Naive thymus-derived CD4-positive, alpha-beta T cell (primary cell): ENCODE measurements at regions of chr10 and their contacts with region 1.

Region 1: GRCh38 chr10:69408318-69409175 is 8.2 kb downstream of the TACR2 start:
- DNase-seq: peak; percentile 82 to 92 (median 90)
- ATAC-seq: peak; percentile 94
- H3K4me3 ChIP-seq: peak overlapping the region; percentile 54
- H3K4me3 Mint-ChIP-seq: peak overlapping the region; percentile 65 to 83 (median 74)
- H3K27ac ChIP-seq: peak overlapping the region; percentile 76
- H3K27ac Mint-ChIP-seq: peak overlapping the region; percentile 82 to 96 (median 92)
- H3K4me1 ChIP-seq: peaks cover 13 to 14% of the 10 kb centered on the region in 2 donors
- H3K4me1 Mint-ChIP-seq: peaks cover 14 to 28% (median 20%) of the 10 kb centered on the region in 7 donors
- H3K27me3 ChIP-seq: no peaks in the 10 kb centered on the region
- H3K27me3 Mint-ChIP-seq: no peaks in the 10 kb centered on the region

Region 2: GRCh38 chr10:67764012-67764822 is 1644.3 kb before region 1 on chr10:
- CTCF ChIA-PET with region 1: no interaction called
- POLR2A ChIA-PET with region 1: no interaction called
- intact Hi-C with region 1: loop called in 1 of 2 experiments (anchors 5 kb)
- DNase-seq: peak; percentile 96 to 99 (median 98)
- ATAC-seq: peak; percentile 88
- H3K4me3 ChIP-seq: peak overlapping the region; percentile 99
- H3K4me3 Mint-ChIP-seq: peak overlapping the region; percentile 81 to 99 (median 94)
- H3K27ac ChIP-seq: peak overlapping the region; percentile 81
- H3K27ac Mint-ChIP-seq: peak overlapping the region; percentile 95 to 100 (median 100)
- H3K4me1 ChIP-seq: peaks cover 4 to 6% of the 10 kb centered on the region in 2 donors
- H3K4me1 Mint-ChIP-seq: peaks cover 0 to 37% (median 14%) of the 10 kb centered on the region in 7 donors
- H3K27me3 ChIP-seq: no peaks in the 10 kb centered on the region
- H3K27me3 Mint-ChIP-seq: peaks cover 0 to 16% (median 0%) of the 10 kb centered on the region in 5 donors

Region 3: DNA sequence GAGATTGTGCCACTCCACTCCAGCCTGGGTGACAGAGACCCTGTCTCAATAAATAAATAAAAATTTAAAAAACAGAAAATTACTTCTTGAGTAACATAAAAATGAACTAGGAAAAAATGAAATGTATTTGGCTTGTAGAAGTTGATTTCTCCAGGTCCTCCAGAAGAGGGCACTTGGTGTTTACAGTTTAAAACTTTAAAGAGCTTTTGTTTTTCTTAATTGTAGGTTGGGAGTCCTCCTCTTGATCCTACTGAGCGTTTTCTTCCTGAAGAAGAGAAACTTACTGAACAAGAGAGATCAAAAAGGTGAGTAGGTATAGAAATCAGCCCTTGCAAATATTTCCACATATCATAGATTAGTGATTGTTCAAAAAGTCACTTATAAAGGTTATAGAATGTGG is 403.7 kb before region 1 on chr10:
- CTCF ChIA-PET with region 1: no interaction called
- POLR2A ChIA-PET with region 1: no interaction called
- intact Hi-C with region 1: loop called in 1 of 2 experiments (anchors 5 kb)
- DNase-seq: peak in 7 of 9 donors; percentile 42 to 72 (median 60)
- ATAC-seq: peak; percentile 74
- H3K4me3 ChIP-seq: no peak overlapping the region
- H3K4me3 Mint-ChIP-seq: no peak overlapping the region
- H3K27ac ChIP-seq: no peak overlapping the region
- H3K27ac Mint-ChIP-seq: peak overlapping the region in 4 of 9 donors; percentile 23 to 43 (median 28)
- H3K4me1 ChIP-seq: peaks cover 0 to 3% of the 10 kb centered on the region in 2 donors
- H3K4me1 Mint-ChIP-seq: peaks cover 0 to 11% (median 5%) of the 10 kb centered on the region in 7 donors
- H3K27me3 ChIP-seq: no peaks in the 10 kb centered on the region
- H3K27me3 Mint-ChIP-seq: no peaks in the 10 kb centered on the region

Region 4: GRCh38 chr10:69318106-69318866 is 90.3 kb before region 1 on chr10:
- CTCF ChIA-PET with region 1: interaction called, 3 read pairs
- POLR2A ChIA-PET with region 1: interaction called, 5 read pairs
- intact Hi-C with region 1: loop called (anchors 1 kb)
- DNase-seq: peak; percentile 88 to 96 (median 91)
- ATAC-seq: peak; percentile 97
- H3K4me3 ChIP-seq: peak overlapping the region; percentile 85
- H3K4me3 Mint-ChIP-seq: peak overlapping the region; percentile 86 to 99 (median 96)
- H3K27ac ChIP-seq: peak overlapping the region; percentile 90
- H3K27ac Mint-ChIP-seq: peak overlapping the region; percentile 51 to 97 (median 86)
- H3K4me1 ChIP-seq: peaks cover 22 to 26% of the 10 kb centered on the region in 2 donors
- H3K4me1 Mint-ChIP-seq: peaks cover 7 to 49% (median 36%) of the 10 kb centered on the region in 7 donors
- H3K27me3 ChIP-seq: no peaks in the 10 kb centered on the region
- H3K27me3 Mint-ChIP-seq: no peaks in the 10 kb centered on the region

Region 5: GRCh38 chr10:69451209-69451783 is 42.7 kb after region 1 on chr10 and contains the start of gene TSPAN15:
- CTCF ChIA-PET with region 1: interaction called, 3 read pairs
- POLR2A ChIA-PET with region 1: interaction called, 4 read pairs
- intact Hi-C with region 1: loop called in 1 of 2 experiments (anchors 1 kb)
- DNase-seq: peak; percentile 61 to 81 (median 75)
- ATAC-seq: peak; percentile 94
- H3K4me3 ChIP-seq: peak within 1 kb of the TSS; percentile 67
- H3K4me3 Mint-ChIP-seq: peak within 1 kb of the TSS; percentile 80 to 92 (median 87)
- H3K27ac ChIP-seq: peak within 1 kb of the TSS; percentile 49
- H3K27ac Mint-ChIP-seq: peak within 1 kb of the TSS in 5 of 9 donors; percentile 5 to 82 (median 62)
- H3K4me1 ChIP-seq: peaks cover 0 to 6% of the 10 kb centered on the region in 2 donors
- H3K4me1 Mint-ChIP-seq: peaks cover 13 to 28% (median 22%) of the 10 kb centered on the region in 7 donors
- H3K27me3 ChIP-seq: no peaks in the 10 kb centered on the region
- H3K27me3 Mint-ChIP-seq: peaks cover 0 to 15% (median 5%) of the 10 kb centered on the region in 5 donors
- total RNA-seq, gene TSPAN15: 1.2 to 7.2 (median 1.9) TPM

Region 6: DNA sequence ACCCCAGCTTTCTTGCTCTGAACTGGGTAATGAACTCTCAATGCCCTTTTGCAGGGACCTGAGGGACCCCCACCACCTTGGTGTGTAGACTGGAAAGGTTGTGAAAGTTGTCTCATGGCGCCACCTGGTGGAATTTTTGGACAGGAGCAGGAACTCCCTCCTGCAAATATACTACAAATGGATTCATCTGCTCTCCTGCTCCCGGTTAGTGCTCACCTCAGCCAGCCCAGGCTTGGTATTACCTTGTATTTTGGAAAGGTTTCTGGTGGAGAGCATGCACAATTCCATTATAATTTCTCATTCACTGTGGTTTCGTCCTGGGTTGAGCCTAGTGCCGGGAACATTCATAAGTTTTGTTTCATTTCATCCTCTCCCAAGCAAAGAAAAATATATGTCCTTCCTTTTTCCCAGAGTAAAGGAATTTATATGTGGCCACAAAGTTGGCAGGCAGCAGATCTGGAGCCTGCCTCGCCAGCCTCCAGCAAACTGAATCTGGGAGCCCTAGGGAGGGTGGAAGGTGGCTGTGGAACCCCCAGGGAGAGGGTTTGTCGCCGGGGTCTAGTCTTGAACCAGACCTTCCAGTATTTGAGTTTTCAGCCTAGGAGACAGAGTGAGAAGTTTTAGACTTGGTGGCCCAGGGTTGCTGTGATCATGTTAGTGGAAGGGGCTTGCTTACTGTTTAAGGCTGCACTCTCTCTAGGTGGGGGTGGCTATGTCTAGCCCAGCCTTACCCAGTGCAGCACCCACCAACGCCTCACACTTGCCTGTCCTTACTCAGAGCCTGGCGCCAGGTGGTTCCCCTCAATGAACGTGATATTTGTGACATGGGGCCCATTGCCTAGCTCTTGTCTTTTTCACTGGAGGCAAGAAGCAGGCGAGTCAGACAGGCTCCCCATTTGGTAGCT is 231.0 kb after region 1 on chr10:
- CTCF ChIA-PET with region 1: interaction called, 5 read pairs
- POLR2A ChIA-PET with region 1: interaction called, 5 read pairs
- intact Hi-C with region 1: loop called (anchors 1 to 2 kb)
- DNase-seq: peak; percentile 37 to 75 (median 68)
- ATAC-seq: peak; percentile 61
- H3K4me3 ChIP-seq: no peak overlapping the region
- H3K4me3 Mint-ChIP-seq: no peak overlapping the region
- H3K27ac ChIP-seq: no peak overlapping the region
- H3K27ac Mint-ChIP-seq: peak overlapping the region in 2 of 9 donors; percentile 9 to 10
- H3K4me1 ChIP-seq: no peaks in the 10 kb centered on the region
- H3K4me1 Mint-ChIP-seq: peaks cover 0 to 6% (median 0%) of the 10 kb centered on the region in 7 donors
- H3K27me3 ChIP-seq: no peaks in the 10 kb centered on the region
- H3K27me3 Mint-ChIP-seq: peaks cover 0 to 5% (median 0%) of the 10 kb centered on the region in 5 donors